H1 (cell line): ENCODE measurements at regions of chr5 and their contacts with region 1.

Region 1: DNA sequence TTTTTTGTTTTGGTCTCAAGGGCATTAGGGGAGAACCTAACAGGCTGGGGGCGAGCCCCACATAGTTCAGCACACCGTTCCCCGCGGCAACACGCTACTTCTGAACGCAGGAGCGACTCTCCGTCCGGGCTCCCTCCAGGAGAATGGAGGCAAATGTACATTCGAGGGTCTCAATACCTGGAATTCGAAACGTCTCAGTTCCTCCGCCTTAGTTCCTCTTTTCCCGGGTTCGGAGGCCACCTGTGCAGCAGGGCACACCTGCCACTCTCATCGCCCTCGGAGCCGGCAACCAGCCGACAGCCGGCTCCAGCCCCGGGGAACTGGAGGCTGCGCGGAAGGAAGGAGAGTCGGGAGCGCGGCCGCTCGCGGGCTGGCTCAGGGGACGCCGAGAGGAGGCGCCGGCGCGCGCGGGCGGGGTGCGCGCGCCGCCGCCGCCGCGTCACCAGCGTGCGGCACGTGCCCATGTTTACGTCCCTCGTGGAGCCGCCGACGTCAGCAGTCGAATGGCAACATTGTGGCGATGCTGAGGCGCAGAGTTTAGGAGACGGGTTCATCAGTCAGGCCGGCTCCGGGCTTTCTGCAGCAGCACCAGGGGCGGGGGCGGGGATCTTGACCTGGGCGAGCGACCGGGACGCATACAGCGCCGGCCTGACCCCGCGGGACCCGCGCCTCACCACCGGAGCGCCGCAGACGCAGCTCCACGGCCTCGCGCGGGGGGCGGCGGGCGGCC is at the start of gene JMY:
- DNase-seq: peak; percentile 41 to 80
- H3K4me3 ChIP-seq: peak within 1 kb of the TSS; percentile 70 to 89 (median 83)
- H3K27ac ChIP-seq: peak within 1 kb of the TSS; percentile 92
- H3K4me1 ChIP-seq: peaks cover 0 to 2% (median under 1%) of the 10 kb centered on the region in 4 experiments; a peak in 1 of 7 replicates
- H3K27me3 ChIP-seq: no peaks in the 10 kb centered on the region
- CTCF ChIP-seq: no peak
- EP300 ChIP-seq: no peak
- POLR2A ChIP-seq: peak; percentile 61 to 83
- RAD21 ChIP-seq: no peak; a peak in 1 of 4 replicates
- total RNA-seq, gene JMY: 13.9 and 14.0 TPM in 2 replicates

Region 2: GRCh38 chr5:79047199-79047598 is 188.6 kb before region 1 on chr5:
- CTCF ChIA-PET with region 1: no interaction called
- POLR2A ChIA-PET with region 1: no interaction called
- DNase-seq: no peak
- H3K4me3 ChIP-seq: no peak overlapping the region
- H3K27ac ChIP-seq: no peak overlapping the region
- H3K4me1 ChIP-seq: no peaks in the 10 kb centered on the region
- H3K27me3 ChIP-seq: no peaks in the 10 kb centered on the region
- CTCF ChIP-seq: no peak
- EP300 ChIP-seq: no peak
- POLR2A ChIP-seq: no peak
- RAD21 ChIP-seq: no peak

Region 3: GRCh38 chr5:79093762-79094161 is 142.0 kb before region 1 on chr5:
- CTCF ChIA-PET with region 1: no interaction called
- POLR2A ChIA-PET with region 1: no interaction called
- DNase-seq: no peak
- H3K4me3 ChIP-seq: no peak overlapping the region
- H3K27ac ChIP-seq: no peak overlapping the region
- H3K4me1 ChIP-seq: no peaks in the 10 kb centered on the region
- H3K27me3 ChIP-seq: no peaks in the 10 kb centered on the region; a peak in 1 of 7 replicates
- CTCF ChIP-seq: no peak
- EP300 ChIP-seq: no peak
- POLR2A ChIP-seq: no peak
- RAD21 ChIP-seq: no peak

Region 4: GRCh38 chr5:79255786-79256557 is 20.2 kb after region 1 on chr5:
- CTCF ChIA-PET with region 1: interaction called, 20 read pairs
- POLR2A ChIA-PET with region 1: interaction called, 10 read pairs
- DNase-seq: peak; percentile 63 to 78
- H3K4me3 ChIP-seq: no peak overlapping the region
- H3K27ac ChIP-seq: 0 out of 2 replicates have a peak overlapping the region, but pooled peaks have one; percentile 22
- H3K4me1 ChIP-seq: peaks cover 0 to 13% (median 7%) of the 10 kb centered on the region in 4 experiments
- H3K27me3 ChIP-seq: no peaks in the 10 kb centered on the region
- CTCF ChIP-seq: peak; percentile 66 to 91 (median 82)
- EP300 ChIP-seq: no peak
- POLR2A ChIP-seq: no peak
- RAD21 ChIP-seq: peak; percentile 68 to 74